HCT116 (cell line): ENCODE measurements at regions of chr10 and their contacts with region 1.

Region 1: DNA sequence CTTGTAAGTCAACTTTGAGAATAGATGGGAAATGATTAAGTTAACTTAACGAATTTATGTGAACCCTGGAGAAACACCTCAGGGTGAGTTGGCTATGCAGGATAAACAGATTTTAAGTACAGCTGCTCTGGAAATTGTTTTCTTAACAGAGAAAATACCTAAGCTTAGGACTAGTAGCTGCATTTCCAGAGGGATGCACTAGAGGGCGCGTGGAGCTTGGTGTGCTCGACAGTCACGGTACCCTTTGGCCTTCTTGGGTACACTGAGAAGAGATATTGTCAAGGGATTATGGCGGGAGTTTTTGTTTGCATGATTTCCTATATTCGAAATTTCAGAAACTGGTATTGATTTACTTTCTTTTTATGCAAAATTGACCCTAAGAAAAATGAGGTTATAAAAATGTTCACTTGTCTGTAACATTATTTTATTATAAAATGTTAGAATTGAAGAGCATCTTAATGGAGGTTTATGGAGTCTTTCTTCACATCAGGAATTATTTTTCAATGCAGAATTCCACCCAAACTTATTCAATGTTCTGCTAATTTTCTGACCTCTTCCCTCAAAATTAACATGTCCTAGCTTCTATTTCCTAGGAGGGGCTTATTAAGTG is 58.4 kb upstream of the MYO3A start:
- DNase-seq: peak; percentile 57
- ATAC-seq: peak; percentile 84
- H3K4me3 ChIP-seq: no peak overlapping the region
- H3K27ac ChIP-seq: no peak overlapping the region
- H3K4me1 ChIP-seq: no peaks in the 10 kb centered on the region
- H3K27me3 ChIP-seq: peaks cover 11% of the 10 kb centered on the region; the same call in 1 of the 2 replicates
- CTCF ChIP-seq: peak; percentile 44 to 85 (median 83); a peak in 5 of 6 replicates
- POLR2A ChIP-seq: no peak
- RAD21 ChIP-seq: peak; percentile 68

Region 2: GRCh38 chr10:25382029-25382810 is 493.4 kb before region 1 on chr10:
- CTCF ChIA-PET with region 1: no interaction called
- POLR2A ChIA-PET with region 1: no interaction called
- RAD21 ChIA-PET with region 1: no interaction called
- intact Hi-C with region 1: no loop called
- DNase-seq: no peak
- ATAC-seq: no peak
- H3K4me3 ChIP-seq: no peak overlapping the region
- H3K27ac ChIP-seq: no peak overlapping the region
- H3K4me1 ChIP-seq: no peaks in the 10 kb centered on the region
- H3K27me3 ChIP-seq: no peaks in the 10 kb centered on the region
- CTCF ChIP-seq: no peak
- POLR2A ChIP-seq: no peak
- RAD21 ChIP-seq: no peak

Region 3: GRCh38 chr10:26157734-26158133 is 282.1 kb after region 1 on chr10:
- CTCF ChIA-PET with region 1: no interaction called
- POLR2A ChIA-PET with region 1: no interaction called
- RAD21 ChIA-PET with region 1: no interaction called
- intact Hi-C with region 1: loop called (anchors 5 kb)
- DNase-seq: no peak
- ATAC-seq: peak; percentile 72
- H3K4me3 ChIP-seq: no peak overlapping the region
- H3K27ac ChIP-seq: no peak overlapping the region
- H3K4me1 ChIP-seq: no peaks in the 10 kb centered on the region
- H3K27me3 ChIP-seq: peaks cover 2% of the 10 kb centered on the region; the same call in 1 of the 2 replicates
- CTCF ChIP-seq: peak in 2 of 3 experiments; percentile 22 to 26; a peak in 2 of 6 replicates
- POLR2A ChIP-seq: no peak
- RAD21 ChIP-seq: no peak

Region 4: GRCh38 chr10:26269754-26270153 is 394.1 kb after region 1 on chr10:
- CTCF ChIA-PET with region 1: interaction called, 18 read pairs
- POLR2A ChIA-PET with region 1: no interaction called
- RAD21 ChIA-PET with region 1: no interaction called
- intact Hi-C with region 1: loop called (anchors 1 kb)
- DNase-seq: peak; percentile 42
- ATAC-seq: peak; percentile 90
- H3K4me3 ChIP-seq: no peak overlapping the region
- H3K27ac ChIP-seq: no peak overlapping the region
- H3K4me1 ChIP-seq: no peaks in the 10 kb centered on the region
- H3K27me3 ChIP-seq: peaks cover 51% of the 10 kb centered on the region
- CTCF ChIP-seq: peak; percentile 32 to 52 (median 41); a peak in 5 of 6 replicates
- POLR2A ChIP-seq: no peak
- RAD21 ChIP-seq: peak; percentile 66

Region 5: GRCh38 chr10:26556748-26557640 is 681.3 kb after region 1 on chr10:
- CTCF ChIA-PET with region 1: interaction called, 6 read pairs
- POLR2A ChIA-PET with region 1: no interaction called
- RAD21 ChIA-PET with region 1: no interaction called
- intact Hi-C with region 1: loop called (anchors 5 kb)
- DNase-seq: peak; percentile 50
- ATAC-seq: peak; percentile 89
- H3K4me3 ChIP-seq: peak overlapping the region; percentile 10 to 31
- H3K27ac ChIP-seq: no peak overlapping the region
- H3K4me1 ChIP-seq: peaks cover 0 to 7% of the 10 kb centered on the region in 2 experiments; a peak in 2 of 4 replicates
- H3K27me3 ChIP-seq: peaks cover 22% of the 10 kb centered on the region; the same call in 1 of the 2 replicates
- CTCF ChIP-seq: peak; percentile 75 to 93 (median 76)
- POLR2A ChIP-seq: no peak
- RAD21 ChIP-seq: peak; percentile 91

Region 6: GRCh38 chr10:26969145-26969926 is 1093.7 kb after region 1 on chr10:
- CTCF ChIA-PET with region 1: no interaction called
- POLR2A ChIA-PET with region 1: no interaction called
- RAD21 ChIA-PET with region 1: no interaction called
- intact Hi-C with region 1: no loop called
- DNase-seq: no peak
- ATAC-seq: no peak
- H3K4me3 ChIP-seq: no peak overlapping the region
- H3K27ac ChIP-seq: no peak overlapping the region
- H3K4me1 ChIP-seq: no peaks in the 10 kb centered on the region
- H3K27me3 ChIP-seq: no peaks in the 10 kb centered on the region
- CTCF ChIP-seq: no peak
- POLR2A ChIP-seq: no peak
- RAD21 ChIP-seq: no peak